ENCODE measurements at regions of chr19 and their contacts with region 1.

Region 1: GRCh38 chr19:35716801-35717666 is 769 bp upstream of the KMT2B start:
- DNase-seq: peak; percentile 97
- H3K4me3 Mint-ChIP-seq: peak overlapping the region; percentile 94
- H3K27ac Mint-ChIP-seq: peak overlapping the region; percentile 92
- H3K4me1 Mint-ChIP-seq: peaks cover 35% of the 10 kb centered on the region
- H3K27me3 Mint-ChIP-seq: no peaks in the 10 kb centered on the region

Region 2: GRCh38 chr19:35557539-35558399 is 159.3 kb before region 1 on chr19:
- intact Hi-C with region 1: no loop called
- DNase-seq: peak; percentile 31
- H3K4me3 Mint-ChIP-seq: peak overlapping the region; percentile 73
- H3K27ac Mint-ChIP-seq: no peak overlapping the region
- H3K4me1 Mint-ChIP-seq: peaks cover 2% of the 10 kb centered on the region
- H3K27me3 Mint-ChIP-seq: peaks cover 34% of the 10 kb centered on the region

Region 3: GRCh38 chr19:35648017-35648961 is 68.7 kb before region 1 on chr19 and contains the start of gene COX6B1:
- intact Hi-C with region 1: loop called (anchors 2 kb)
- DNase-seq: peak; percentile 93
- H3K4me3 Mint-ChIP-seq: peak within 1 kb of the TSS; percentile 96
- H3K27ac Mint-ChIP-seq: peak within 1 kb of the TSS; percentile 71
- H3K4me1 Mint-ChIP-seq: peaks cover 17% of the 10 kb centered on the region
- H3K27me3 Mint-ChIP-seq: no peaks in the 10 kb centered on the region
- total RNA-seq, gene COX6B1: 431 and 461 TPM in 2 replicates

Region 4: DNA sequence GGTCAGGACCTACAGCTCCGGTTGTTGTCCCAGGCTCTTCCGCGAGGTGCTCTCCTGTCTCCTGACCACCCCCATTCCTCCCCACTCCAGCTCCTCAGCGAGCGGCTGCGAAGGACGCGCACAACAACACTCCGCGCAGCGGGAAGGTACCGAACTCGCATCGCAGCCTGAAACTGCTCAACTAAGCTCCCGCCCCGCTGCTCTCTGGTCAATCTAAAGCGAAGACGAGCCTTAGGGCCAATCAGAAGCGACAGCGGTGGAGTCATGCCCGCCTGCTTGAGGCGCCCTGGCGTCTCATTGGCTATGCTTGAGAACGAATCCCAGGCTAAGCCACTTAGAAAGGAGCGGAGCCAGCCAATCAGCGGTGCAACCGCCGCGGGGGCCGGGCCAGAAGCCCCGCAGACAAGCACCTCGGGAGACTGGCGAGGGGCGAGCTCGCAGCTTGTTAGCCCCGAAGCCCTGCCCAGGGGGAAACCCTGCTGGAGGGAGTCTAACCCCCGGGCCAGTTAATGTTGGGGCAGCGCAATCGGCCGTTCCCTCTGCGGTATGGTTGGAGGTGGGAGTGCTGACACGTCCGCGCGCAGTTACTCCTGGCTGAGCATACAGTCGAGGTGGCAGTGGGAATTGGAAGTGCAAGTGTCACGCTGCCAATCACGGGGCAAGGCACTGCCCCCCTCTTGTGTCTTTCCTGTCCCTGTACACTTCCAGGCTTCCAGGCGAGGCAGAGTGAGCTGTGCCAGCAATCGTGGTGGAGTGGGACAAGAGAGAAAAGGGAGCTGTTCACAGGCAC is 14.6 kb before region 1 on chr19:
- intact Hi-C with region 1: loop called (anchors 2 kb)
- DNase-seq: peak; percentile 93
- H3K4me3 Mint-ChIP-seq: peak overlapping the region; percentile 91
- H3K27ac Mint-ChIP-seq: peak overlapping the region; percentile 91
- H3K4me1 Mint-ChIP-seq: peaks cover 11% of the 10 kb centered on the region
- H3K27me3 Mint-ChIP-seq: no peaks in the 10 kb centered on the region

Region 5: GRCh38 chr19:35757749-35758608 is 40.9 kb after region 1 on chr19 and contains the start of gene PROSER3:
- intact Hi-C with region 1: loop called (anchors 1 kb)
- DNase-seq: peak; percentile 100
- H3K4me3 Mint-ChIP-seq: peak within 1 kb of the TSS; percentile 83
- H3K27ac Mint-ChIP-seq: peak within 1 kb of the TSS; percentile 85
- H3K4me1 Mint-ChIP-seq: peaks cover 21% of the 10 kb centered on the region
- H3K27me3 Mint-ChIP-seq: no peaks in the 10 kb centered on the region
- total RNA-seq, gene PROSER3: 40.1 and 41.2 TPM in 2 replicates

Region 6: GRCh38 chr19:35931161-35931873 is 214.3 kb after region 1 on chr19:
- intact Hi-C with region 1: loop called (anchors 1 kb)
- DNase-seq: peak; percentile 100
- H3K4me3 Mint-ChIP-seq: peak overlapping the region; percentile 70
- H3K27ac Mint-ChIP-seq: peak overlapping the region; percentile 76
- H3K4me1 Mint-ChIP-seq: peaks cover 24% of the 10 kb centered on the region
- H3K27me3 Mint-ChIP-seq: no peaks in the 10 kb centered on the region

Measured in activated T-helper 2 cell treated with anti-CD3 and anti-CD28 coated beads, Interferon-gamma antibody, Interleukin-2, Interleukin-4, amounts not matched to agents 10 μg/mL and 5 μg/mL and 100 μg/mL, durations not matched to agents 14 hours and 24 hours and 36 hours (primary cell).